ENCODE measurements at regions of chr10 and their contacts with region 1.

Region 1: DNA sequence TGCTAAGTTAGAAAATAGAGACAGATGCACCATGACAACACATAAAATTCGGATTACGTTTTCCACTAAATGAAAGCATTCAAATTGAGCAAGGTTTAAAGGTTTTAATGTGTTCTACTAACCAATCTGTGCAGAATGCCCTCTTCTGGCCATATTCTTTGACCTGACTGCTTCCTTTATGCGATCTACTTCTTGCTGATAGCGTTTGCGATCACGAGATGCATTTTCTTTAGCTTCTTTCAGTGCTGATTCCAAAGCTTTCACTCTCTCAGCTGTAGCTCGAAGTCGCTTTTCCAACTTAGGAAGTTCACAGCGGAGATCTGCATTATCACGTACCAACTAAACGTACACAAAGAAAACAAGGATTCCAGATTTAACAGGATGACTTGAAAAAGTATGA is 39.2 kb downstream of the KIF5B start:
- DNase-seq: no peak
- H3K4me3 Mint-ChIP-seq: no peak overlapping the region
- H3K27ac Mint-ChIP-seq: no peak overlapping the region
- H3K4me1 Mint-ChIP-seq: no peaks in the 10 kb centered on the region
- H3K27me3 Mint-ChIP-seq: no peaks in the 10 kb centered on the region

Region 2: GRCh38 chr10:32033171-32033570 is 16.1 kb after region 1 on chr10:
- intact Hi-C with region 1: loop called (anchors 2 kb)
- DNase-seq: no peak
- H3K4me3 Mint-ChIP-seq: no peak overlapping the region
- H3K27ac Mint-ChIP-seq: peak overlapping the region; percentile 1
- H3K4me1 Mint-ChIP-seq: no peaks in the 10 kb centered on the region
- H3K27me3 Mint-ChIP-seq: no peaks in the 10 kb centered on the region

Measured in activated T-helper 1 cell treated with anti-CD3 and anti-CD28 coated beads, Interleukin-12 subunit alpha, Interleukin-12 subunit beta, Interleukin-2, Interleukin-4 antibody, amounts not matched to agents 30 ng/mL and 10 ng/mL and 1 ng/mL, durations not matched to agents 14 hours and 24 hours and 36 hours (primary cell).